ENCODE measurements at regions of chr21 and their contacts with region 1.

Region 1: GRCh38 chr21:33825915-33826314 is 89.7 kb downstream of the ATP5PO start:
- DNase-seq: no peak
- ATAC-seq: peak; percentile 24
- H3K4me3 ChIP-seq: no peak overlapping the region
- H3K27ac ChIP-seq: no peak overlapping the region
- H3K4me1 ChIP-seq: peaks cover 7 to 20% of the 10 kb centered on the region in 2 donors
- H3K27me3 ChIP-seq: no peaks in the 10 kb centered on the region

Region 2: GRCh38 chr21:33403779-33404585 is 421.9 kb before region 1 on chr21:
- intact Hi-C with region 1: no loop called
- DNase-seq: peak; percentile 85 to 92
- ATAC-seq: peak; percentile 66
- H3K4me3 ChIP-seq: peak overlapping the region; percentile 92 to 99
- H3K27ac ChIP-seq: peak overlapping the region; percentile 90 to 91
- H3K4me1 ChIP-seq: peaks cover 0 to 2% of the 10 kb centered on the region in 2 donors
- H3K27me3 ChIP-seq: no peaks in the 10 kb centered on the region

Region 3: GRCh38 chr21:33767236-33767635 is 58.7 kb before region 1 on chr21:
- intact Hi-C with region 1: no loop called
- DNase-seq: no peak
- ATAC-seq: no peak
- H3K4me3 ChIP-seq: no peak overlapping the region
- H3K27ac ChIP-seq: no peak overlapping the region
- H3K4me1 ChIP-seq: peaks cover 0 to 3% of the 10 kb centered on the region in 2 donors
- H3K27me3 ChIP-seq: no peaks in the 10 kb centered on the region

Region 4: DNA sequence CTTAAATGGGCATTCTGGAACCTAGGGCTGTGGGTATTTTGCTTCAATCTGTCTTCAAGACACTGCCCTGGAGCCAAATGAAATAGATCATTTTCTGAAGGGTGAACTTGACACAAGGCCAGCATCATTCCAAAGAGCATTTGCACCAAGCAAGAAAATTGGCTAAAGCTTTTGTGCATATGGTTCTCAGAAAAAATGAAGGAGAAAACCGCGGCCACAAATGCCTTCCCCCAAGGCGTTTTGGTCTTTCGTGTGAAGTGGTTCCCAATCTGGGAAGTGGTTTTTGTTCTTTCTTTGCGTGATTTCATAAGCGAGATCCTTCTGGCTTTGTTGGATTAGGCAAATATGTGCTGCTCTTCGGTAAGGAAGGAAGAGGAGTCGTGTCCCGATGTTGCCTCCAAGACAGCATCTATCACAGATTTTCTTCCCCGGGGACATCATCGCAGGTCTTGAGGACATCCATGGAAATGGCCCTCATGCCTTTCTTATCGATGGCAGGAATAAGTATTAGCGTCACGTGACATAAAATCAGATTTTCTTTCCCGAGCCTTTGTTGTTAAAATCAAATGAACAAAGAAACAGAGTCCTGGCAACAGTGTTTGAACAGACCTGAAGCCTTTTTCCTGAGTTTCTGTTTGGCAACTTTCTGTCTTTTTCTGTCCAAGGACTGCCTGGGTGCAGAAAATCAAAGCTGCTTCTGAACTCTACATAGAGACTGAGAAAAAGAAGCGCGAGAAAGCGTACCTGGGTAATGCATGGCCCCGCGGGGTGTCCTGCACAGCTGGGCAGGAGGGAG is 58.7 kb after region 1 on chr21:
- intact Hi-C with region 1: loop called in 1 of 2 experiments (anchors 5 kb)
- DNase-seq: peak in 1 of 2 donors; percentile 14
- ATAC-seq: no peak
- H3K4me3 ChIP-seq: no peak overlapping the region
- H3K27ac ChIP-seq: no peak overlapping the region
- H3K4me1 ChIP-seq: no peaks in the 10 kb centered on the region
- H3K27me3 ChIP-seq: no peaks in the 10 kb centered on the region

Region 5: GRCh38 chr21:33894736-33895288 is 68.9 kb after region 1 on chr21:
- intact Hi-C with region 1: loop called in 1 of 2 experiments (anchors 5 kb)
- DNase-seq: peak; percentile 90 to 92
- ATAC-seq: peak; percentile 87
- H3K4me3 ChIP-seq: peak overlapping the region in 1 of 2 donors; percentile 24
- H3K27ac ChIP-seq: no peak overlapping the region
- H3K4me1 ChIP-seq: peaks cover 0 to 4% of the 10 kb centered on the region in 2 donors
- H3K27me3 ChIP-seq: no peaks in the 10 kb centered on the region

Region 6: DNA sequence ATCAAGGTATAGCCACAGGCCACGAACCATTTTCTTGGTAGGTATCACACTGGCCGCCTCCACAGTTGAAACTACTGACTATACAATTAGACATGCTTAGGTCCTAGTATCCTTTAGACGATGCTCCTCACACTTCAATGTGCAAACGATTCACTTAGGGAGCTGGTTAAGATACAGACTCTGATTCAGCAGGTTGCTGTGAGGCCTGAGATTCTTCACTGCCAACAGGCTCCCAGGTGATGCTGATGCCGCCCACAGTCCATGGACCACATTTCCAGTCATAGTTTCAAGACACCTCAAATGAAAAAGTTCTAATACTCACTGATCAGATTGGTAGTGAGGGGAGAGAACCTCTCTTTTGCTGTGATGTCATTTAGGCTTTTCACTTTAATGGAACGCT is 82.8 kb after region 1 on chr21:
- intact Hi-C with region 1: no loop called
- DNase-seq: no peak
- ATAC-seq: no peak
- H3K4me3 ChIP-seq: no peak overlapping the region
- H3K27ac ChIP-seq: no peak overlapping the region
- H3K4me1 ChIP-seq: no peaks in the 10 kb centered on the region
- H3K27me3 ChIP-seq: no peaks in the 10 kb centered on the region

Measured in aorta (tissue), 5 donors.